Posterior vena cava (tissue), 2 donors: ENCODE measurements at regions of chr10 and their contacts with region 1.

Region 1: DNA sequence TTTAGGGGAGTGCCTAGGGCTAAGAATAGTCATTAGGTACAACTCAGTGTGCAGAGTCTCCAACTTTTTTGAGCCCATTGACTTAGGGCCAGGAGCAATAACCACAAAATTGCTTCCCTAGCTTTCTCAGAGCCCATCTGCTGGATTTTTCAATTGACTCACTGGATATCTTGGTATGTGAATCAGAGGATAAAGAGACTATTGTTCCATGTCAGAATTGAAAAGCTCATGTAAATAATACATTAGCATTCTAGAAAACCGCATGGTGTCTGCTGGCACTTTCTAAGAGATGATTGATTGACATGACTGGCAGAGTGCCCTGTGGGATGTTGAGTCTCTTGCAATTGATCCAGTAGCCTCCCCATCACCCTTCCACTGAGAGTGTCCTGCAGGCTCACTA is 246.2 kb downstream of the CCDC7 start:
- DNase-seq: no peak

Region 2: DNA sequence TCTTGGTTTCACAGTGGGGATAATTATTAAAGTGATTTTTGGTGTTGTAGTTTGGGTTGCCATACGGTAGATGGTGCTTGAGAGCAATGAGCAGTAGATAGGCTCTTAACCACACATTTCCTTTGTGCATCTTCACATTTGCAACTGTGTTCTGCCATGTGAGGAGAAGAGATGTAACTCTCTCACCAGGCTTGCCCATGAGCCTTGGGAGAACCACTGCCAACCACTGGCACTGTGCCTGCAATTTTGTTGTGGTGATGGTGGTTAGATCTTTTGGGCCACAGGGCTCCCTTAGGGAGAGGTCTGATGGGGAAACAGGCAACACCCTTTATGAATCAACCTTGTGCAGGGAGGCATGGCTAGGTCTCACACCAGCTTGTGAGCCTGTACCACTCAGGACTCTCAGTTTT is 41.9 kb before region 1 on chr10:
- intact Hi-C with region 1: loop called in 1 of 2 experiments (anchors 2 kb)
- DNase-seq: no peak